MCF 10A (cell line): ENCODE measurements at regions of chr6 and their contacts with region 1.

Region 1: GRCh38 chr6:156686995-156687788 is 90.0 kb upstream of the ARID1B start:
- DNase-seq: peak; percentile 70
- H3K4me3 Mint-ChIP-seq: peak overlapping the region; percentile 74
- H3K27ac Mint-ChIP-seq: peak overlapping the region; percentile 61
- H3K4me1 Mint-ChIP-seq: peaks cover 8% of the 10 kb centered on the region
- H3K27me3 Mint-ChIP-seq: no peaks in the 10 kb centered on the region
- CTCF ChIP-seq: no peak

Region 2: DNA sequence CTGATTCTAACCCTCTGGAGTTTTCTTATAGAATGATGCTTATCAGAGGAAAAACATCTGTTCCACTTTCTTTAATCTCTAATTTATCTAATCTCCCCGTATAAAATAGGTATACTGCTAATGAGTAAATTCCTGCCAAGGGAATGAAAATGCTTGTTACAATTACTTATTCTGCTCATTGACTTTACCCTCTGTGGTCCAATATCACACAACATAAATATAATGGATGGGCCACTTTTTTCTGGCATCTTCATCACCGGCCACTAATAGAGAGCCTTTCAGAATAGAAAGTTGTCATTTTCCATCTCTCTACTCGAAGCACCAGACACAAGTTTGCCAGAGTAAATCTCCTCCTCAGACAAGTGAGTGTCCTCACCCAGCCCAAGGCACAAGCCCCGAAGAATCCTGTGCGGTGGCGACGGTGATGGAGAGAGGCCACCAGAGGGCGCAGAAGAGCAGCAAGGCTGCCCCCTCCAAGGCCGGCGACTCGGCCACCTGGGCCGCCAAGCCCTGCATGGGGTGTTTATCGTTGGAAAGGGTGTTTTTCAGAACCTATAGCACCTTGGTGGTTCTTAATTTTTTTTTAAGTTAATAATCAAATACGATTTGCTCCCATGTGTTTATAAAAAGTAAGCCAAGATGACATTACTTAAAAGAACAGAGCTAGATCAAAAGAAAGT is 122.9 kb before region 1 on chr6:
- CTCF ChIA-PET with region 1: interaction called, 4 read pairs
- POLR2A ChIA-PET with region 1: no interaction called
- intact Hi-C with region 1: loop called (anchors 1 kb)
- DNase-seq: peak; percentile 65
- H3K4me3 Mint-ChIP-seq: no peak overlapping the region
- H3K27ac Mint-ChIP-seq: no peak overlapping the region
- H3K4me1 Mint-ChIP-seq: no peaks in the 10 kb centered on the region
- H3K27me3 Mint-ChIP-seq: no peaks in the 10 kb centered on the region
- CTCF ChIP-seq: peak; percentile 90

Region 3: GRCh38 chr6:156781861-156782631 is 94.9 kb after region 1 on chr6:
- CTCF ChIA-PET with region 1: interaction called, 3 read pairs
- POLR2A ChIA-PET with region 1: interaction called, 85 read pairs
- intact Hi-C with region 1: loop called (anchors 1 kb)
- DNase-seq: peak; percentile 16
- H3K4me3 Mint-ChIP-seq: peak overlapping the region; percentile 79
- H3K27ac Mint-ChIP-seq: peak overlapping the region; percentile 97
- H3K4me1 Mint-ChIP-seq: peaks cover 13% of the 10 kb centered on the region
- H3K27me3 Mint-ChIP-seq: no peaks in the 10 kb centered on the region
- CTCF ChIP-seq: no peak

Region 4: DNA sequence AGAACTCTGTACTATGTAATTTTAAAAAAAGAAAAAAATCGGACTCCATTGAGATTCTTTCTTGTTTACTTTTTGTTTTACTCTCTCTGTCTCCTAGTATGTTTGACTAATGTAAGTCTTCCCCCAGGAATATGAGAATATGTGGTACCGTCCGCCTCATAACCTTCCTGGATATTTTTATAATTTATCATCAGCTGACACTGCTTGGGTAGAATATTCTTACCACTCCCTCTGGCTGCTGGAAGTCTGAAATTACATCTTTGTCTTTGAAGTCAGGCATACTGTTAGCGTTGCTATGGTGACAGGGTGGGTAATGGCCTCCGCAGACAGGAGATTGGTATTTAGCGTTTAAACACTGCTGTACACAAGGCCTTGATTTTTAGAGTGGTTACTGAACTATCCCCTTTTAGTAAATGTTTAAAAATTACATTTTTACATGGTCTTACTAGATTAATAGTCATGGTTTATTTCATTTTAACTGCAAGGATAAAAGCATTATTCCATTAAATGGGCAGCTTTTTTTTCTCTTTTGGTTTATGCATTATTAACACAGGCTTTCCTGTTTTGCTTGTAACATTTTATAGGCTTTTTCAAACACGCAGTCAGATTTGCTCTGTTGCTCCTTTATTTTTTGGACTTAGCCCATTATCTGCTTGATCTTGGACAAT is 266.4 kb after region 1 on chr6:
- CTCF ChIA-PET with region 1: interaction called, 4 read pairs
- POLR2A ChIA-PET with region 1: interaction called, 5 read pairs
- intact Hi-C with region 1: loop called (anchors 2 kb)
- DNase-seq: peak; percentile 90
- H3K4me3 Mint-ChIP-seq: peak overlapping the region; percentile 58
- H3K27ac Mint-ChIP-seq: peak overlapping the region; percentile 93
- H3K4me1 Mint-ChIP-seq: peaks cover 56% of the 10 kb centered on the region
- H3K27me3 Mint-ChIP-seq: no peaks in the 10 kb centered on the region
- CTCF ChIP-seq: no peak